Activated B cell treated with CpG ODN at 0.5 μM for 24 hours (primary cell): ENCODE measurements at regions of chr13 and their contacts with region 1.

Region 1: GRCh38 chr13:48126944-48127830 is 32.3 kb upstream of the MED4 start:
- DNase-seq: no peak
- ATAC-seq: peak; percentile 90
- H3K4me3 Mint-ChIP-seq: no peak overlapping the region
- H3K27ac Mint-ChIP-seq: peak overlapping the region; percentile 9
- H3K4me1 Mint-ChIP-seq: peaks cover 7% of the 10 kb centered on the region
- H3K27me3 Mint-ChIP-seq: no peaks in the 10 kb centered on the region
- CTCF ChIP-seq: peak; percentile 74

Region 2: DNA sequence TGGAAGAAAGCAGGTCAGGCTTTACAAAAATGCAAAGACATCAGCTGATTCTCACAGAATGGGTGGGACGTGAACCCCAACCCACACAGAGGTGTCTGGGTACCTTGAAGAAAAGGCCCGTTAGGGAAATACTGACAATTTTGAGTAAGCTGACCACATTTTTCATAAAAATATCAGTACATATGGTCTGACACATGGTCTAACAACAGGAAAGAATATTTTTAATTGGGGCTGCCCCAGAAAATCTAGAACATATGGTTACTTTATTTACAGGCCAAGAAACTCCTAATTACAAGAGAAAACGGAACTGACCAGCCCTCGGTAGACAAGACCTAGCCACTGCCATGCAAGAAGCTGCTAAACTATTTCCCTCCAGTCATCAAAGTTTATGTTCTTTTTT is 57.1 kb after region 1 on chr13:
- CTCF ChIA-PET with region 1: interaction called, 5 read pairs
- POLR2A ChIA-PET with region 1: no interaction called
- intact Hi-C with region 1: loop called (anchors 2 kb)
- DNase-seq: no peak
- ATAC-seq: no peak
- H3K4me3 Mint-ChIP-seq: peak overlapping the region; percentile 21
- H3K27ac Mint-ChIP-seq: peak overlapping the region; percentile 61
- H3K4me1 Mint-ChIP-seq: peaks cover 66% of the 10 kb centered on the region
- H3K27me3 Mint-ChIP-seq: no peaks in the 10 kb centered on the region
- CTCF ChIP-seq: no peak

Region 3: GRCh38 chr13:48194379-48194754 is 67.2 kb after region 1 on chr13:
- CTCF ChIA-PET with region 1: no interaction called
- POLR2A ChIA-PET with region 1: interaction called, 5 read pairs
- intact Hi-C with region 1: loop called (anchors 1 kb)
- DNase-seq: no peak
- ATAC-seq: peak; percentile 98
- H3K4me3 Mint-ChIP-seq: peak overlapping the region; percentile 60
- H3K27ac Mint-ChIP-seq: peak overlapping the region; percentile 82
- H3K4me1 Mint-ChIP-seq: peaks cover 26% of the 10 kb centered on the region
- H3K27me3 Mint-ChIP-seq: peaks cover 4% of the 10 kb centered on the region
- CTCF ChIP-seq: no peak

Region 4: GRCh38 chr13:48318821-48319511 is 191.8 kb after region 1 on chr13:
- CTCF ChIA-PET with region 1: no interaction called
- POLR2A ChIA-PET with region 1: no interaction called
- intact Hi-C with region 1: loop called (anchors 5 kb)
- DNase-seq: no peak
- ATAC-seq: peak; percentile 29
- H3K4me3 Mint-ChIP-seq: peak overlapping the region; percentile 81
- H3K27ac Mint-ChIP-seq: no peak overlapping the region
- H3K4me1 Mint-ChIP-seq: peaks cover 48% of the 10 kb centered on the region
- H3K27me3 Mint-ChIP-seq: no peaks in the 10 kb centered on the region
- CTCF ChIP-seq: no peak

Region 5: GRCh38 chr13:48334534-48335127 is 207.4 kb after region 1 on chr13:
- CTCF ChIA-PET with region 1: interaction called, 20 read pairs
- POLR2A ChIA-PET with region 1: no interaction called
- intact Hi-C with region 1: loop called (anchors 2 kb)
- DNase-seq: no peak
- ATAC-seq: peak; percentile 37
- H3K4me3 Mint-ChIP-seq: no peak overlapping the region
- H3K27ac Mint-ChIP-seq: no peak overlapping the region
- H3K4me1 Mint-ChIP-seq: peaks cover 17% of the 10 kb centered on the region
- H3K27me3 Mint-ChIP-seq: no peaks in the 10 kb centered on the region
- CTCF ChIP-seq: peak; percentile 42

Region 6: GRCh38 chr13:48647630-48648029 is 520.4 kb after region 1 on chr13:
- CTCF ChIA-PET with region 1: interaction called, 3 read pairs
- POLR2A ChIA-PET with region 1: no interaction called
- intact Hi-C with region 1: loop called (anchors 1 kb)
- DNase-seq: no peak
- ATAC-seq: peak; percentile 31
- H3K4me3 Mint-ChIP-seq: no peak overlapping the region
- H3K27ac Mint-ChIP-seq: no peak overlapping the region
- H3K4me1 Mint-ChIP-seq: no peaks in the 10 kb centered on the region
- H3K27me3 Mint-ChIP-seq: peaks cover 16% of the 10 kb centered on the region
- CTCF ChIP-seq: no peak